HCT116 (cell line): ENCODE measurements at regions of chr10 and their contacts with region 1.

Region 1: DNA sequence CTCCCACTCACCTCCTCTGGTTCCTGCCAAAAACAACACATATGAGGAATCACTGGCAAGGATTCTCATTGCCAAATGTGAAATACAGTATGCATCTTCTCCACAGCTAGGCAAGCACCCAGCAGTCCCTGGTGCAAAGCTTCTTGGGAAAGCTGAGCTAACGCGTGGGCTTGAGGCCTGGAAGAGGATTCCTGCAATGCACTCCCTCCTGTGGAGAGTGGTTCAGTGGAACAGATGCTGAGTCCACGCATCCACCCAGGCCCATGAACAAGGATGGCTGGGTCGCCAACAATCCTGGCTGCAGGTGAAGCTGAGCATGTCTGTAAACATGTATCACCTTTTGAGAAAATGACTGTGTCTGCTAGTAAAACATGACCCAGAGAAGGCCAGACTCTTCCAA is 113.2 kb upstream of the CHST15 start:
- DNase-seq: no peak
- ATAC-seq: no peak
- H3K4me3 ChIP-seq: no peak overlapping the region
- H3K27ac ChIP-seq: no peak overlapping the region
- H3K4me1 ChIP-seq: no peaks in the 10 kb centered on the region
- H3K27me3 ChIP-seq: no peaks in the 10 kb centered on the region
- CTCF ChIP-seq: no peak
- POLR2A ChIP-seq: no peak
- RAD21 ChIP-seq: no peak

Region 2: DNA sequence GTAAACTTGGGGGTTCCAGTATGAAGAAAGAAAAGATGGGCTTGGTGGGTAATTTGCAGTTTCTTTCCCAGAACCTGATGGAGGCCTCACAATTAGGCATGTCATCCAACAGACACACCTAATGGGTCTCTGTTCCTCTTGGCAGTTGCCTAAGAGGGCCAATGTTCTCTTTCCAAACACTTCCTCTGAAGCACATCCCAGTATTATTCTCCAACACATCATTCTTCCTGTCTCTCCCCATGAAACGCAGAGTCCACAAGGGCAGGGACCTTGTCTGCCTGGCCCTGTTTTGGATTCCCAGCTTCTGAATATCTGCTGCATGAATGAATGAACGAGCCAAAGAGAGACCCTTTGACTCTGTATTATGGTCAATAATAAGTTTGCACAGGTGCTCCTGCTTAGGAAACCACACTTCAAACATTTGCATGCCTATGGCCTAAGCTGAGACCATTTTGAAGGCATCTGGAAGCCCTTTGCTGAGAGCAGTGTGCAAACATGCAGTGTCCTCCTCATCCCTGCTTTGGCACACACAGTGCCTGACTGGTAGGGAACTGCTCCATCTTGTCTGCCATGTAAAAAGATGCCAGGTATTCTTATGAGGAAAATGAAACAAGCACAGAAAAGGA is 12.3 kb before region 1 on chr10:
- CTCF ChIA-PET with region 1: interaction called, 10 read pairs
- POLR2A ChIA-PET with region 1: no interaction called
- RAD21 ChIA-PET with region 1: no interaction called
- intact Hi-C with region 1: no loop called
- DNase-seq: no peak
- ATAC-seq: no peak
- H3K4me3 ChIP-seq: peak overlapping the region in 1 of 2 experiments; percentile 66; a peak in 1 of 4 replicates
- H3K27ac ChIP-seq: no peak overlapping the region
- H3K4me1 ChIP-seq: peaks cover 0 to 15% of the 10 kb centered on the region in 2 experiments; a peak in 1 of 4 replicates
- H3K27me3 ChIP-seq: no peaks in the 10 kb centered on the region
- CTCF ChIP-seq: no peak
- POLR2A ChIP-seq: no peak
- RAD21 ChIP-seq: no peak

Region 3: DNA sequence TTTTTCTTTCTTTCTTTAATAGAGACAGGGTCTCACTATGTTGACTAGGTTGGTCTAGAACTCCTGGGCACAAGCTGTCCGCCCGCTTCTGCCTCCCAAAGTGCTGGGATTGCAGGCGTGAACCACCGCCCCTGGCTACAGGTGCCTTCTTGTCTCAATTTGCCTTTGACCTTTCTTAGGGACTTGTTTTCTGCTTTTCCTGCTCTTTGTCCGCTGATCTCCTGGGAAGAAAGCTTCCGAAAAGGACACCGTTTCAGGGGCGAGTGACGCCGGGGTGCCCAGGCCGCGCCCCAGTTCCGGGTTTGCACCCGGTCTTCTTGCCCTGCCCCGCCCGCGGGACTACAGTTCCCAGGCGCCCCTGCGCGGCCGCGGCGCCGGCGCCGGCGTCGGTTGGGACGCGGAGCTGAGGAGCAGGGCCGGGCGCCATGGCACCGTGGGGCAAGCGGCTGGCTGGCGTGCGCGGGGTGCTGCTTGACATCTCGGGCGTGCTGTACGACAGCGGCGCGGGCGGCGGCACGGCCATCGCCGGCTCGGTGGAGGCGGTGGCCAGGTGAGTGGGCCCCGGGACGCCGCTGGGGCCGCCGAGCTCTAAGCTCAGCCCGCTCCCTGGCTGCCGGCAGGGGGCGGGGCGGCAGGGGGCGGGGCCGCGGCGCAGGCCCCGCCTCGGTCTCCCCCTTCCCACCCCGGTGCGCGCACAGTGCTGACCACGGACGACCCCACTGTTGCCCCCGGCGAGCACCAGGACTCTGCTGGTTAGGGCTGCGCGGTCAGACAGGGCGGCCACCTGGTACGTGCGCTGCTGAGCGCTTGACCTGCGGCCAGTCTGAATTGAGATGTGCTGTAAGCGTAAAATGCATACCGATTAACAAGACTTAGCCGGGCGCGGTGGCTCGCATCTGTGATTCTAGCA is 255.1 kb after region 1 on chr10 and contains the start of gene LHPP:
- CTCF ChIA-PET with region 1: no interaction called
- POLR2A ChIA-PET with region 1: no interaction called
- RAD21 ChIA-PET with region 1: no interaction called
- intact Hi-C with region 1: no loop called
- DNase-seq: peak; percentile 69
- ATAC-seq: peak; percentile 98
- H3K4me3 ChIP-seq: peak within 1 kb of the TSS; percentile 66 to 85
- H3K27ac ChIP-seq: peak within 1 kb of the TSS; percentile 69
- H3K4me1 ChIP-seq: peaks cover 6 to 37% of the 10 kb centered on the region in 2 experiments; a peak in 3 of 4 replicates
- H3K27me3 ChIP-seq: no peaks in the 10 kb centered on the region
- CTCF ChIP-seq: peak in 1 of 3 experiments; percentile 20; a peak in 2 of 6 replicates
- POLR2A ChIP-seq: peak; percentile 67
- RAD21 ChIP-seq: no peak
- total RNA-seq, gene LHPP: 45.8 TPM

Region 4: DNA sequence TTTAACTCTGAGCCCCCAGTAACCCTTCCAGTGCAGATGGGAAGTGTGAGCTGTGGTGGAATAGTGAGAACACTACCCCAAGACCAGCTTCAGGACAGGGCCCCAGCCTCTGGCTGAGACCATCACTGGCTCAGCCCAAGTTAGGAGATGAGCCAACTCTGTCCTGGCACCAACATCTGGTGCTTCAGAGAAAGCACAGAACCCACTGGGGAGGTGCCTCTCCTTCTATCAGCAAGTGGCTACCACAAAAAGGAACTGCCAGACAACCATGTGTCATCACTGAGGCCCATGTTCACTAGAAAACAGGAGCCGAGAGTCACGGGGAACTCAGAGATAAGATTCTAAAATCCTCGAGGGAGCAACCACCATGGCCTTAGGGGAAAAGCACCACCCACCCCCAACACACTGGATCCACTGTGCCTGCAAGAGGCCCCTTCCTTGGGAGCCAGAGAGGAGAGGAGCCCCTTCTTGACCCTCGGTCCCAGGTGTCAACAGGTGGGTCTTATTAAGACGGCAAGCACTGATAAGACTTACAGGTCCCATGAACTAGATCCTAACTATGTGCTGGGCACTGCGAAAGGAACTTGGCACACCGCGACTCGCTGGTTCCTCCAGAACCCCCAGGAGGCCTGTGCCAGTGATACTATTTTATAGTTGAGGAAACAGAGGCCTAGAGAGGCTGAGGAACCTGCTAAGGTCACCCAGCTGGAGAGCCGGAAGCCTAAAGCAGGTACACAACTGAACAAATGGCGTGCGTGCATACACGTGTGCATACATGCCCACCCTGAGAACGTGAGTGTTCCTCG is 434.9 kb after region 1 on chr10:
- CTCF ChIA-PET with region 1: no interaction called
- POLR2A ChIA-PET with region 1: no interaction called
- RAD21 ChIA-PET with region 1: no interaction called
- intact Hi-C with region 1: no loop called
- DNase-seq: no peak
- ATAC-seq: no peak
- H3K4me3 ChIP-seq: no peak overlapping the region
- H3K27ac ChIP-seq: no peak overlapping the region
- H3K4me1 ChIP-seq: peaks cover 0 to 1% of the 10 kb centered on the region in 2 experiments; a peak in 1 of 4 replicates
- H3K27me3 ChIP-seq: no peaks in the 10 kb centered on the region
- CTCF ChIP-seq: no peak
- POLR2A ChIP-seq: no peak
- RAD21 ChIP-seq: no peak